Activated CD4-positive, alpha-beta T cell treated with anti-CD3 and anti-CD28 coated beads for 36 hours (primary cell): ENCODE measurements at regions of chr1 and their contacts with region 1.

Region 1: GRCh38 chr1:158124999-158125398 is 55.7 kb upstream of the CD1D start:
- DNase-seq: peak; percentile 82
- ATAC-seq: peak; percentile 95
- H3K4me3 Mint-ChIP-seq: no peak overlapping the region
- H3K27ac Mint-ChIP-seq: no peak overlapping the region
- H3K4me1 Mint-ChIP-seq: no peaks in the 10 kb centered on the region
- H3K27me3 Mint-ChIP-seq: peaks cover 16% of the 10 kb centered on the region

Region 2: DNA sequence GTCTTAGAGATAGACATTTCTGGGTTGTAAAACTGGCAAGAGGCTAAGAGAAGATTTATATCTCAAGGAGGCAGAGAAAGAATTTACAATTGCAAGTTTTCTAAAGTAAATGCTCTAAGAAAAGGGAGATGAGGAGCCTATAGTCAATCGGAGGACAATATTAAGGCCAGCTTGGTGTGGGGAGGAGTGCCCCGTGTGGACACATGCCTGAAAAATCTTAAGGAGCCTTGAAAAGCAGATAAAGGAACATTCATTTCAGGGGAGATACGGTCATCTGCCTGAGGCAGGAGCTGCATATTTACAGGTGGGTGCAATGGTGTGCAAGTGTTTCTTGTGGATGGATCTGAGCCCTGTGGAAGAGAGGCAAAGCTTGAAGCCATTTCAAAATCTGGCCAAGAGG is 373.7 kb before region 1 on chr1:
- CTCF ChIA-PET with region 1: no interaction called
- POLR2A ChIA-PET with region 1: no interaction called
- intact Hi-C with region 1: no loop called
- DNase-seq: no peak
- ATAC-seq: no peak
- H3K4me3 Mint-ChIP-seq: no peak overlapping the region
- H3K27ac Mint-ChIP-seq: no peak overlapping the region
- H3K4me1 Mint-ChIP-seq: no peaks in the 10 kb centered on the region
- H3K27me3 Mint-ChIP-seq: peaks cover 5% of the 10 kb centered on the region

Region 3: DNA sequence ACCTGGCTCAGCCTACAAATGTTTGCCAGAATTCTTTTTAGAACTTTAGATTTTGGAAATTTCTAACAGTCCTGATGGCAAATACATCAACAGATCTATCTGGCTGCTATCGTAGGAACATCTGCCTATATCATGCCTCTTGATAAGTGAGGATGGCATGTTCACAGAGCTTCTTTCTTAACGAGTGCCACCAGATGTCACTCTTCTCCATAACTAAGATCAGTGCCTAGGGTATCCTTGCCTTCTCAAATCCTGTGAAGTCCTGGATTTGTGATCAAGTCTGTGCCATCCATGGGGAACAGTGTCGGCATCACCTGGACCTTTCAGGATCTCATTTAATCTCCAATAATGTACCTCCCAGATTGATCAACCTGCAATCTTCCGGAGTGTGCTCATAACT is 246.9 kb before region 1 on chr1:
- CTCF ChIA-PET with region 1: no interaction called
- POLR2A ChIA-PET with region 1: no interaction called
- intact Hi-C with region 1: loop called in 1 of 2 experiments (anchors 5 kb)
- DNase-seq: no peak
- ATAC-seq: no peak
- H3K4me3 Mint-ChIP-seq: no peak overlapping the region
- H3K27ac Mint-ChIP-seq: no peak overlapping the region
- H3K4me1 Mint-ChIP-seq: no peaks in the 10 kb centered on the region
- H3K27me3 Mint-ChIP-seq: peaks cover 10% of the 10 kb centered on the region

Region 4: GRCh38 chr1:157969697-157970485 is 155.1 kb before region 1 on chr1:
- CTCF ChIA-PET with region 1: interaction called, 20 read pairs
- POLR2A ChIA-PET with region 1: no interaction called
- intact Hi-C with region 1: no loop called
- DNase-seq: peak; percentile 20
- ATAC-seq: no peak
- H3K4me3 Mint-ChIP-seq: no peak overlapping the region
- H3K27ac Mint-ChIP-seq: no peak overlapping the region
- H3K4me1 Mint-ChIP-seq: no peaks in the 10 kb centered on the region
- H3K27me3 Mint-ChIP-seq: peaks cover 4% of the 10 kb centered on the region

Region 5: GRCh38 chr1:158095737-158096335 is 29.2 kb before region 1 on chr1:
- CTCF ChIA-PET with region 1: interaction called, 112 read pairs
- POLR2A ChIA-PET with region 1: no interaction called
- intact Hi-C with region 1: loop called in 1 of 2 experiments (anchors 1 kb)
- DNase-seq: peak; percentile 63
- ATAC-seq: peak; percentile 88
- H3K4me3 Mint-ChIP-seq: no peak overlapping the region
- H3K27ac Mint-ChIP-seq: no peak overlapping the region
- H3K4me1 Mint-ChIP-seq: no peaks in the 10 kb centered on the region
- H3K27me3 Mint-ChIP-seq: no peaks in the 10 kb centered on the region